HCT116 (cell line): ENCODE measurements at regions of chr20 and their contacts with region 1.

Region 1: GRCh38 chr20:8527998-8528723 is 396.1 kb downstream of the PLCB1 start:
- DNase-seq: no peak
- ATAC-seq: no peak
- H3K4me3 ChIP-seq: no peak overlapping the region
- H3K27ac ChIP-seq: no peak overlapping the region
- H3K4me1 ChIP-seq: no peaks in the 10 kb centered on the region
- H3K27me3 ChIP-seq: no peaks in the 10 kb centered on the region
- CTCF ChIP-seq: no peak
- POLR2A ChIP-seq: no peak
- RAD21 ChIP-seq: no peak

Region 2: GRCh38 chr20:8043687-8044282 is 484.4 kb before region 1 on chr20:
- CTCF ChIA-PET with region 1: no interaction called
- POLR2A ChIA-PET with region 1: no interaction called
- RAD21 ChIA-PET with region 1: no interaction called
- intact Hi-C with region 1: loop called (anchors 10 kb)
- DNase-seq: peak; percentile 60
- ATAC-seq: peak; percentile 91
- H3K4me3 ChIP-seq: no peak overlapping the region
- H3K27ac ChIP-seq: no peak overlapping the region
- H3K4me1 ChIP-seq: no peaks in the 10 kb centered on the region; a peak in 1 of 4 replicates
- H3K27me3 ChIP-seq: no peaks in the 10 kb centered on the region
- CTCF ChIP-seq: peak; percentile 46 to 61 (median 55); a peak in 5 of 6 replicates
- POLR2A ChIP-seq: no peak
- RAD21 ChIP-seq: peak; percentile 69

Region 3: GRCh38 chr20:8449123-8449522 is 79.0 kb before region 1 on chr20:
- CTCF ChIA-PET with region 1: no interaction called
- POLR2A ChIA-PET with region 1: no interaction called
- RAD21 ChIA-PET with region 1: no interaction called
- intact Hi-C with region 1: no loop called
- DNase-seq: no peak
- ATAC-seq: no peak
- H3K4me3 ChIP-seq: no peak overlapping the region
- H3K27ac ChIP-seq: no peak overlapping the region
- H3K4me1 ChIP-seq: no peaks in the 10 kb centered on the region
- H3K27me3 ChIP-seq: no peaks in the 10 kb centered on the region
- CTCF ChIP-seq: no peak
- POLR2A ChIP-seq: no peak
- RAD21 ChIP-seq: no peak

Region 4: DNA sequence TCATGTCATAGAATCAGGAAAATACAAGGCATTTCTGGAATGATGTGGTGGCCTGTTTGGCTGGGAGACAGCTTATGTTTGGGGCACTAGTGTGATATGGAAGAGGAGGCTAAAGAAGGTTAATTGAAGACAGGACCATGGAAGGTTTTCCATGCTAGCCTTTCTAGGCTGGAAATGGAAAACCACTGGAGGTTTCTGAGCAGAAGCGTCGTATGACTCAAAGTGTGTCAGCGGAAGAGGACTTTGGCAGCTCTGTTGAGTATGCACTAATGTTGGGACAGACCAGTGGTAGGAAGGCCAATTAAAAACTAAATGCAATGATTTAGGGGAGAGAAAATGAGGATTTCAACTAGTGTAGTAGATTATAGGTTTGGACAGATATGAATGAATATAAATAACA is 17.1 kb after region 1 on chr20:
- CTCF ChIA-PET with region 1: no interaction called
- POLR2A ChIA-PET with region 1: no interaction called
- RAD21 ChIA-PET with region 1: no interaction called
- intact Hi-C with region 1: no loop called
- DNase-seq: no peak
- ATAC-seq: no peak
- H3K4me3 ChIP-seq: no peak overlapping the region
- H3K27ac ChIP-seq: no peak overlapping the region
- H3K4me1 ChIP-seq: no peaks in the 10 kb centered on the region
- H3K27me3 ChIP-seq: no peaks in the 10 kb centered on the region
- CTCF ChIP-seq: no peak
- POLR2A ChIP-seq: no peak
- RAD21 ChIP-seq: no peak